HepG2 (cell line): ENCODE measurements at regions of chr1 and their contacts with region 1.

Region 1: GRCh38 chr1:172532700-172533509 is at the start of gene SUCO:
- DNase-seq: peak; percentile 96
- ATAC-seq: peak; percentile 95
- H3K4me3 ChIP-seq: peak within 1 kb of the TSS; percentile 90 to 98 (median 91)
- H3K27ac ChIP-seq: peak within 1 kb of the TSS; percentile 95
- H3K4me1 ChIP-seq: peaks cover 53% of the 10 kb centered on the region
- H3K27me3 ChIP-seq: no peaks in the 10 kb centered on the region; a peak in 1 of 5 replicates
- CTCF ChIP-seq: peak; percentile 20; the same call in 1 of the 2 replicates
- EP300 ChIP-seq: peak in 1 of 2 experiments; percentile 11; a peak in 1 of 4 replicates
- POLR2A ChIP-seq: peak; percentile 82 to 87
- RAD21 ChIP-seq: peak; percentile 77
- total RNA-seq, gene SUCO: 17.0 and 25.5 TPM in 2 replicates

Region 2: DNA sequence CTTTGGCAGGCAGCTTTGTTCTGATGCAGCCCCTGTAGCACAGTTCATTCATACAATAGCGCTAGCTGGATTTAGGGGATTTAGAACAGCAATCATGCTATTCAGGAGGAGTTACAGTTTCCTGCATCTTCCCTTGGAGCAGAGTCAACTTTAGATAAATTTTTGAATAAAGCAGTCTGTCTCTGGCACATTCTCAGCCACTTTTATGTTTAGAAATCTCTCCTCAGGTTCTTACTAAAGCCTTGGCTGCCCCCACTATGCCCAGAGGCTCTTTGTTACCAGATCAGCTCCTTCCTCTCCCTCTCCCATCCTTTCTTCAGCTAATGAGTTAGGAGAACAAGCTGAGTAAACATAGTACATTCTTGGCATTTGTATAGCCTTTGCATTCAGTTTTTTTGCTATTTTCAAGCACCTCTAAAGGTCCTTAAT is 72.0 kb before region 1 on chr1:
- CTCF ChIA-PET with region 1: no interaction called
- POLR2A ChIA-PET with region 1: interaction called, 11 read pairs
- in situ Hi-C with region 1: no loop called
- intact Hi-C with region 1: no loop called
- DNase-seq: no peak
- ATAC-seq: no peak
- H3K4me3 ChIP-seq: no peak overlapping the region
- H3K27ac ChIP-seq: no peak overlapping the region
- H3K4me1 ChIP-seq: 0 out of 2 replicates have a peak, but pooled peaks cover 6% of the 10 kb centered on the region
- H3K27me3 ChIP-seq: no peaks in the 10 kb centered on the region
- CTCF ChIP-seq: no peak
- EP300 ChIP-seq: no peak
- POLR2A ChIP-seq: no peak
- RAD21 ChIP-seq: no peak

Region 3: GRCh38 chr1:172473302-172473701 is 59.6 kb before region 1 on chr1:
- CTCF ChIA-PET with region 1: no interaction called
- POLR2A ChIA-PET with region 1: interaction called, 14 read pairs
- in situ Hi-C with region 1: loop called (anchors 5 kb)
- intact Hi-C with region 1: loop called (anchors 1 kb)
- DNase-seq: no peak
- ATAC-seq: no peak
- H3K4me3 ChIP-seq: no peak overlapping the region
- H3K27ac ChIP-seq: no peak overlapping the region
- H3K4me1 ChIP-seq: peaks cover 74% of the 10 kb centered on the region
- H3K27me3 ChIP-seq: no peaks in the 10 kb centered on the region
- CTCF ChIP-seq: no peak
- EP300 ChIP-seq: no peak
- POLR2A ChIP-seq: no peak
- RAD21 ChIP-seq: no peak

Region 4: DNA sequence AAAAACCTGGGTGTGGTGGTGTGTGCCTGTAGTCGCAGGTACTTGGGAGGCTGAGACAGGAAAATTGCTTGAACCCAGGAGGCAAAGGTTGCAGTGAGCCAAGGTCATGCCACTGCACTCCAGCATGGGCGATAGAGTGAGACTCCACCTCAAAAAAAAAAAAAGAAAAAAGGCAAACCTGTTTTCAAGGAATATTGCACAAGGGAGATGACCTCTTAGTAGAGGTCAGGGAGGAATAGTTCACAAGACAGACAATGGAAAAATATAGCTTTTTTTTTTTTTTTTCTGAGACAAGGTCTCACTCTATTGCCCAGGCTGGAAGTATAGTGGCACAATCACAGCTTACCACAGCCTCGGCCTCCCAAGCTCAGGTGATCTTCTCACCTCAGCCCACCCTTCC is 22.4 kb before region 1 on chr1:
- CTCF ChIA-PET with region 1: no interaction called
- POLR2A ChIA-PET with region 1: interaction called, 13 read pairs
- in situ Hi-C with region 1: no loop called
- intact Hi-C with region 1: no loop called
- DNase-seq: peak; percentile 35
- ATAC-seq: no peak
- H3K4me3 ChIP-seq: no peak overlapping the region
- H3K27ac ChIP-seq: no peak overlapping the region
- H3K4me1 ChIP-seq: no peaks in the 10 kb centered on the region
- H3K27me3 ChIP-seq: no peaks in the 10 kb centered on the region; a peak in 1 of 5 replicates
- CTCF ChIP-seq: no peak
- EP300 ChIP-seq: no peak
- POLR2A ChIP-seq: no peak
- RAD21 ChIP-seq: no peak

Region 5: GRCh38 chr1:172630056-172630818 is 97.3 kb after region 1 on chr1:
- CTCF ChIA-PET with region 1: no interaction called
- POLR2A ChIA-PET with region 1: no interaction called
- in situ Hi-C with region 1: no loop called
- intact Hi-C with region 1: no loop called
- DNase-seq: no peak
- ATAC-seq: no peak
- H3K4me3 ChIP-seq: no peak overlapping the region
- H3K27ac ChIP-seq: no peak overlapping the region
- H3K4me1 ChIP-seq: peaks cover 36% of the 10 kb centered on the region
- H3K27me3 ChIP-seq: no peaks in the 10 kb centered on the region
- CTCF ChIP-seq: no peak
- EP300 ChIP-seq: no peak
- POLR2A ChIP-seq: no peak
- RAD21 ChIP-seq: no peak

Region 6: GRCh38 chr1:172719694-172720138 is 186.8 kb after region 1 on chr1:
- CTCF ChIA-PET with region 1: no interaction called
- POLR2A ChIA-PET with region 1: interaction called, 3 read pairs
- in situ Hi-C with region 1: no loop called
- intact Hi-C with region 1: loop called (anchors 1 kb)
- DNase-seq: peak; percentile 44
- ATAC-seq: peak; percentile 74; the same call in 2 of the 3 replicates
- H3K4me3 ChIP-seq: no peak overlapping the region
- H3K27ac ChIP-seq: no peak overlapping the region
- H3K4me1 ChIP-seq: peaks cover 25% of the 10 kb centered on the region
- H3K27me3 ChIP-seq: no peaks in the 10 kb centered on the region
- CTCF ChIP-seq: peak; percentile 67
- EP300 ChIP-seq: no peak
- POLR2A ChIP-seq: no peak
- RAD21 ChIP-seq: peak; percentile 30; the same call in 1 of the 2 replicates